ENCODE measurements at regions of chr2 and their contacts with region 1.

Region 1: GRCh38 chr2:39696838-39697237 is 31.1 kb downstream of the TMEM178A start:
- DNase-seq: peak; percentile 28
- H3K4me3 ChIP-seq: no peak overlapping the region
- CTCF ChIP-seq: no peak

Region 2: DNA sequence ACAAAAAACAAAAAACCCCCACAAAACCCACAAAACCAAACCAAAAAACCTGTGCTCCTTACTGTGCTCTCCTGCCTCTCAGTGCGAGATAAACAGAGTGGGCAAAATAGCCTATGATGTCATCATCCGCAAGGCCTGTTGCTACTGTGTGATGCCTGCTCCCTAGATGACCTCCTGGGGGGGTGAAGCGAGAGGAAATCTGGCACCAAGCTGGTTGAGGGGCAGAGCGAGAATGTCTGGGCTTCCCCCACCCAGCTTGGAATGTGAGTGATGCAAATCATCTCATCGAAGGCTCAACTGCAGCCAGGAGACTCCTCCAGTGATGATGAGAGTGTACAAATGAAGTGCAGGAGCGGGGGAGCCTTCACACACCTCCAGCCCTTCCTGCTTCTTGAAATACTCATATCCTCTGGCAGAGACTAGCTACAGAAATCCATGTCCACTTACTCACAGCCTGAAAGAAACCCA is 202.0 kb before region 1 on chr2:
- CTCF ChIA-PET with region 1: interaction called, 10 read pairs
- POLR2A ChIA-PET with region 1: interaction called, 3 read pairs
- DNase-seq: peak; percentile 97
- H3K4me3 ChIP-seq: no peak overlapping the region
- CTCF ChIP-seq: no peak

Region 3: GRCh38 chr2:39513641-39514094 is 183.2 kb before region 1 on chr2:
- CTCF ChIA-PET with region 1: interaction called, 48 read pairs
- POLR2A ChIA-PET with region 1: no interaction called
- DNase-seq: peak; percentile 85
- H3K4me3 ChIP-seq: no peak overlapping the region
- CTCF ChIP-seq: peak; percentile 73

Region 4: GRCh38 chr2:39593439-39594393 is 103.1 kb before region 1 on chr2:
- CTCF ChIA-PET with region 1: interaction called, 84 read pairs
- POLR2A ChIA-PET with region 1: no interaction called
- DNase-seq: peak; percentile 37
- H3K4me3 ChIP-seq: no peak overlapping the region
- CTCF ChIP-seq: peak; percentile 79

Region 5: DNA sequence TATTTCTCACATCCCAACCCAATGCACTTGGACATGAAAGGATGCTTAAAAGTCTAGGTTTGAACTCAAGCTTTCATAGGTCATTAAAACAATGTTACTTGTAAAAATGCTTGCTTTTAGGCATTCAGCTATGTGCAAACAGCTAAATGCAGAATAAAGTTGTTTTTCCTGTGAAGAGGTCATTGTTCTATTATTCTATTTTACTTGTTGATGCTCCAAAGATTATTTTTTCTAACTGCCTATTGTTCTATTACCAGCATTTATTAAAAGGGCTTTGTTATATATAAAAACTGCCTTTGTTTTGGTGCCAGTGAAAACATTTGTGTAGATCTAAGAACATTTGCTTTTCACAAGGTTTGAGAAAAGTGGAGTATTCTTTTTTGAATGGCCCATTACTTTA is 18.3 kb after region 1 on chr2:
- CTCF ChIA-PET with region 1: interaction called, 18 read pairs
- POLR2A ChIA-PET with region 1: no interaction called
- DNase-seq: no peak
- H3K4me3 ChIP-seq: no peak overlapping the region
- CTCF ChIP-seq: no peak

Region 6: DNA sequence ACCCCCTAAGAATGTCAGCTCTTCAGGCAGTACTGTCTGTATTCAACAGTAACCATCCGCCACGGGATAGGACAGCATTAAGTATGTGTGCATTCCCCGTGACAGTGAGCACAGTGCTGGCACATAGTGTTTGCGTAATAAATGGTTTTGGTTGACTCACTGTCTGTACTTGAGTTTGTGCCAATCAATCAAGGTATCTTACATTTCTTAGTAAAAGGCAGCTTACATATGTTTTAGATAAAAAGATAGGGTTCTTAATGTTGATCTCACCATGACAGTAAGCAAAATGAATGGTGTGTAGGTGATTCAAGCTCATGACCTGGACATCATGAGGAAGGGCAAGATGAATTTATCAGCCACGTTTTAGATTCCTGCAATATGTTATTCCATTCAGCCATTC is 496.1 kb after region 1 on chr2:
- CTCF ChIA-PET with region 1: no interaction called
- POLR2A ChIA-PET with region 1: no interaction called
- DNase-seq: no peak
- H3K4me3 ChIP-seq: no peak overlapping the region
- CTCF ChIP-seq: no peak